ENCODE measurements at regions of chr20 and their contacts with region 1.

Region 1: DNA sequence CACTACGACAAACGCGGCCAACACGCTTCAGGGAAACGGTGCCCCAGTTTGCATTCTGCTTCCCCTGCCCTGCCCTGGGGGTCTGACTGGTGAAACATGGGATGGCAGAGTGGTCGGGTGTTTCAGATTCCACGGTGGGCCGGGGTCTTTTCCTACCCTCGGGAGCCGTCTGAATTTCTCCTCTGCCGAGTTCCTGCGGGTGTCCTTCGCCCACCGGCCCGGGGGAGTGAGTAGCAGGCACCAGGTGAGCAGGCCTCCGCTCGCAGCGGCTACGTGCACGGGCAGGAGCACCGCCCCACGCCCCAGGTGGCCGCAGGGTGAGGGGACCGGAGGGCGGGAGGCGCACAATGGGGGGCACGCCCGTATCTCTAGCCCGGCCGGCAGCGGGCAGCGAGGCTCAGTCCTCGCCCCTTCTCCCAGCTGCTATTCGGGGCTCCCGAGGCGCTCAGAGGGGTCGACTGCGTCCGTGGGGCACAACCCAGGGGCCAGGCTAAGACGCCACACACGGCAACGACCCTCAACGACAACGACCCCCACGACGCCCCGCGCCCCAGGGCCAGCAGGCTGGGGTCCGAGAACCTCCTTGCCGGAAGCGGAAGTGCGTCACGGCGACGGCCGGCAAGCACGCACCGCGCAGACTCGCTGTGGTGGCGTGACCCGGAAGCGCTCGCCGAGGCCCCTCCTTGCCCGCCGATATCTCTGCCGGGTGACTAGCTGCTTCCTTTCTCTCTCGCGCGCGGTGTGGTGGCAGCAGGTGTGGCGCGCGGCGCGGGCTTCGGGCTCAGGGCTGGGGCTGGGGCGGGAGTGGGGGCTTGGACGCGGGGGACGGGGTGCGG is at the start of gene RPS21:
- DNase-seq: peak; percentile 89
- H3K4me3 Mint-ChIP-seq: peak within 1 kb of the TSS; percentile 92
- H3K27ac Mint-ChIP-seq: peak within 1 kb of the TSS; percentile 96
- H3K4me1 Mint-ChIP-seq: peaks cover 13% of the 10 kb centered on the region
- H3K27me3 Mint-ChIP-seq: no peaks in the 10 kb centered on the region
- CTCF ChIP-seq: no peak
- total RNA-seq, gene RPS21: 1,978 and 2,055 TPM in 2 replicates

Region 2: GRCh38 chr20:62237801-62238571 is 148.6 kb before region 1 on chr20 and contains the start of gene OSBPL2:
- CTCF ChIA-PET with region 1: no interaction called
- POLR2A ChIA-PET with region 1: interaction called, 7 read pairs
- intact Hi-C with region 1: loop called (anchors 5 kb)
- DNase-seq: peak; percentile 98
- H3K4me3 Mint-ChIP-seq: peak within 1 kb of the TSS; percentile 76
- H3K27ac Mint-ChIP-seq: peak within 1 kb of the TSS; percentile 61
- H3K4me1 Mint-ChIP-seq: peaks cover 6% of the 10 kb centered on the region
- H3K27me3 Mint-ChIP-seq: no peaks in the 10 kb centered on the region
- CTCF ChIP-seq: no peak
- total RNA-seq, gene OSBPL2: 38.8 and 51.9 TPM in 2 replicates

Region 3: GRCh38 chr20:62327726-62328495 is 58.7 kb before region 1 on chr20:
- CTCF ChIA-PET with region 1: interaction called, 11 read pairs
- POLR2A ChIA-PET with region 1: no interaction called
- intact Hi-C with region 1: no loop called
- DNase-seq: no peak
- H3K4me3 Mint-ChIP-seq: no peak overlapping the region
- H3K27ac Mint-ChIP-seq: no peak overlapping the region
- H3K4me1 Mint-ChIP-seq: no peaks in the 10 kb centered on the region
- H3K27me3 Mint-ChIP-seq: no peaks in the 10 kb centered on the region
- CTCF ChIP-seq: no peak

Region 4: GRCh38 chr20:62350093-62350628 is 36.4 kb before region 1 on chr20:
- CTCF ChIA-PET with region 1: interaction called, 24 read pairs
- POLR2A ChIA-PET with region 1: interaction called, 48 read pairs
- intact Hi-C with region 1: loop called (anchors 1 kb)
- DNase-seq: peak; percentile 95
- H3K4me3 Mint-ChIP-seq: peak overlapping the region; percentile 53
- H3K27ac Mint-ChIP-seq: peak overlapping the region; percentile 93
- H3K4me1 Mint-ChIP-seq: peaks cover 22% of the 10 kb centered on the region
- H3K27me3 Mint-ChIP-seq: no peaks in the 10 kb centered on the region
- CTCF ChIP-seq: no peak

Region 5: DNA sequence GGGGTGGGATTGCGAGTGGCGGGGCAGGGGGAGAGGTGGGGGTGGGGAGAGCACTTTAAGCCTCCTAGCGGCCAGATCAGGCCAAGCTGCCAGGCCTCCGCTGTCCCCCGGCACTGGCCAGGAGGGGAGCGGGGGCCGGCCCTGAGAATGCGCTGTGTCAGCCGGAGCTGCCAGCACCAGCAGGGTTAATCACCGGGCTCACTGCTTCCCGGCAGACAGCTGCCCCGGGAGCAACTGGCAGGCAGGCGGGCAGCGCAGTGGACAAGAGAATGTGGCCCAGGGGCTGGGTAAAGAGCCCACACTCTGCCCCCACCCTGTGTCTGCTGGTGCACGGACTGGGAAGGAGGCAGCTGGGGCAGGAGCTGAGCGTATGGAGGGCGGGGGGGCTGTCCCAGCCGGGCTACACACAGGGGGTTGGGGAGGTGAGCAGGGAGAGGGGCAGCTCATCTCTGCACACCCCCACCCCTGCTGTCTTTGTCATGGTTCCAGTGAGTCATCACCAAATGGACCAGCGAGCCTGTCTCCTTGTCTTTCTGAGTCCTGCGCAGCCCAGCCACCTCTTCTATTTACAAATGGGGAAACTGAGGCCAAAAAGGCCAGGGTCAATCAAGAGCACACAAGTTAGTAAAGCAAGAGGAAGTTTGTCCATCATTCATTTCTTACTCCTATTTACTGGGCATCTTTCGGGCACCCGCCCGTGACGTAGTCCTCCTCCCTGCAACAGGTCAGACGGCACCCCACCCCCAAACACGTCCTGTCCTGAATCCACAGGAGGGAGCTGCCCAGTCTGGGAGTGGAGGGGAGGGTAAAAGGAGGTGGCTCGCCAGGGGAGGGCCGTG is 17.4 kb before region 1 on chr20:
- CTCF ChIA-PET with region 1: interaction called, 53 read pairs
- POLR2A ChIA-PET with region 1: interaction called, 307 read pairs
- intact Hi-C with region 1: no loop called
- DNase-seq: peak; percentile 76
- H3K4me3 Mint-ChIP-seq: peak overlapping the region; percentile 80
- H3K27ac Mint-ChIP-seq: no peak overlapping the region
- H3K4me1 Mint-ChIP-seq: peaks cover 35% of the 10 kb centered on the region
- H3K27me3 Mint-ChIP-seq: no peaks in the 10 kb centered on the region
- CTCF ChIP-seq: peak; percentile 30

Region 6: GRCh38 chr20:62623488-62624324 is 237.1 kb after region 1 on chr20:
- CTCF ChIA-PET with region 1: interaction called, 4 read pairs
- POLR2A ChIA-PET with region 1: interaction called, 12 read pairs
- intact Hi-C with region 1: no loop called
- DNase-seq: peak; percentile 97
- H3K4me3 Mint-ChIP-seq: peak overlapping the region; percentile 44
- H3K27ac Mint-ChIP-seq: peak overlapping the region; percentile 93
- H3K4me1 Mint-ChIP-seq: peaks cover 19% of the 10 kb centered on the region
- H3K27me3 Mint-ChIP-seq: no peaks in the 10 kb centered on the region
- CTCF ChIP-seq: no peak

Measured in MCF 10A (cell line).